Tibial artery (tissue), 4 donors: ENCODE measurements at regions of chr2 and their contacts with region 1.

Region 1: DNA sequence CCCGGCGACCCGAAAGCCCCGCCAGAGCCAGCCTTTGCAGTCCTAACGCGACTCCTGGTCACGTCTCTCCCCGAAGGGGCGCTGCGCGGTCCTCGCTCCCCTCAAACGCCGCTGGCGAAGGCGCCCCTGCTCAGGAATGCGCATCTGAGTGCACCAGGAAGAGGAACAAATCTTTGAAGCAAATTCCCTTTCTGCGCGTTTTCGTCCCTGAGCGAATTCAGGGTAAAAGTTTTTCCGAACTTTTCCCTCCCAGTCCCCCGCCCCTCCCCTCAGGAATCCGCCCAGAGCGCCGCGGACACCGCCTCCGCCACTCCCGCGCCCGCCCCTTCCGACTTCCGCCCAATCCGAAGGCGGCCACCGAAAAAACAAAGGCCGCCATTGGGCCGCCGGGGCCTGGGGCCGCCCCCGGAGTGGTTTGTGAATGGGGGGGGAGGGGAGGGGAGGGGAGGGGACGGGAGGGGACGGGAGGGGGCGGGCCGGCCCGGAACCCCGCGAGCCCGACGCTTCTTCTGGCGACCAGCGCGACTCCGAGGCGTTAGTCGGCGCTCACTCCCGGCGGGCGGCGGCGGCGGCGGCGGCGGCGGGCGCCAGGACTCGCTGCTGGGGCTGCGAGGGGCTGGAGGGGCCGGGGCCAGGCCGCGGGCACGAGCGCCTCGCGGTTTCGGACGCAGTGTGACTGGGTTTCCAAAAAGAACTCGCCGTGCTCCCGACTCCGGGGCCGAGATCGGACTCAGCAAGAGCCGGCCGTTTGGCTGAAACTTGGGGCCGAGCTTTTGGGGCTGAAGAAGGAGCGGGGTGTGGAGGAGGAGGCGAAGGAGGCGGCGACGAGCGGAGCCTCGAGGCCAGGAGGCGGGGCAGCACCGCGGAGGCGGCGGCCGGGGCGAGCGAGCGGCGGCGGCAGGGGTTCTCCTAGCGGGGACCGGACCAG is at the start of gene FZD7:
- DNase-seq: peak; percentile 91 to 97
- H3K4me3 ChIP-seq: peak within 1 kb of the TSS; percentile 81 to 96
- H3K27ac ChIP-seq: peak within 1 kb of the TSS; percentile 99
- H3K4me1 ChIP-seq: peaks cover 0 to 48% (median 27%) of the 10 kb centered on the region in 4 donors
- H3K27me3 ChIP-seq: no peaks in the 10 kb centered on the region
- CTCF ChIP-seq: no peak

Region 2: GRCh38 chr2:201785135-201785534 is 248.4 kb before region 1 on chr2:
- intact Hi-C with region 1: no loop called
- DNase-seq: no peak
- H3K4me3 ChIP-seq: no peak overlapping the region
- H3K27ac ChIP-seq: no peak overlapping the region
- H3K4me1 ChIP-seq: peaks cover 0 to 9% (median 1%) of the 10 kb centered on the region in 4 donors
- H3K27me3 ChIP-seq: no peaks in the 10 kb centered on the region
- CTCF ChIP-seq: no peak

Region 3: GRCh38 chr2:201795607-201796477 is 237.7 kb before region 1 on chr2:
- intact Hi-C with region 1: loop called (anchors 5 kb)
- DNase-seq: no peak
- H3K4me3 ChIP-seq: no peak overlapping the region
- H3K27ac ChIP-seq: peak overlapping the region in 1 of 2 donors; percentile 67
- H3K4me1 ChIP-seq: peaks cover 0 to 30% (median 1%) of the 10 kb centered on the region in 4 donors
- H3K27me3 ChIP-seq: no peaks in the 10 kb centered on the region
- CTCF ChIP-seq: peak; percentile 62 to 69

Region 4: DNA sequence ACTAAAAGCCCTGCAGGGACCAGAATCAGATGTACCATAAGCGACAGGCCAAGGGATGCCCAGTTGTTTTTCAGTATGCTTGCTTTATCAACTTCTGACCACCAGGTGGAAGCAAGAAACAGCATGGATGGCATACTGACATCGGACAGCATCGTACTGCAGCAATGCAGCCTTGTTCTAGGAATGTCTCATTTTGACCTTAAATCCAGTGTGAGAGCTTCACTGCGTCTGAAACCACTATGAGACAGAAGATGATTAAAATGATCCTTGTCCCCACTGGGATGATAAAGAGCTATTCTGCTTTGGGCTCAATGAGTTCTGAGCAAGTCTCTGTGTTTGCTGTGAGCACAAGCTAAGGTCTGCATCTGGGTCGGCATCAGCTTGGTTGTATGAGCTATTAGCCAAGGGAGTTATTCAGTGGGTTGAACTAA is 172.9 kb before region 1 on chr2:
- intact Hi-C with region 1: loop called (anchors 5 kb)
- DNase-seq: peak in 1 of 2 donors; percentile 28
- H3K4me3 ChIP-seq: no peak overlapping the region
- H3K27ac ChIP-seq: no peak overlapping the region
- H3K4me1 ChIP-seq: no peaks in the 10 kb centered on the region
- H3K27me3 ChIP-seq: no peaks in the 10 kb centered on the region
- CTCF ChIP-seq: peak; percentile 75 to 87

Region 5: GRCh38 chr2:201880993-201881611 is 152.5 kb before region 1 on chr2:
- intact Hi-C with region 1: loop called (anchors 2 kb)
- DNase-seq: peak; percentile 53 to 74
- H3K4me3 ChIP-seq: peak overlapping the region in 1 of 2 donors; percentile 22
- H3K27ac ChIP-seq: peak overlapping the region; percentile 57 to 65
- H3K4me1 ChIP-seq: peaks cover 0 to 46% (median 30%) of the 10 kb centered on the region in 4 donors
- H3K27me3 ChIP-seq: no peaks in the 10 kb centered on the region
- CTCF ChIP-seq: no peak

Region 6: DNA sequence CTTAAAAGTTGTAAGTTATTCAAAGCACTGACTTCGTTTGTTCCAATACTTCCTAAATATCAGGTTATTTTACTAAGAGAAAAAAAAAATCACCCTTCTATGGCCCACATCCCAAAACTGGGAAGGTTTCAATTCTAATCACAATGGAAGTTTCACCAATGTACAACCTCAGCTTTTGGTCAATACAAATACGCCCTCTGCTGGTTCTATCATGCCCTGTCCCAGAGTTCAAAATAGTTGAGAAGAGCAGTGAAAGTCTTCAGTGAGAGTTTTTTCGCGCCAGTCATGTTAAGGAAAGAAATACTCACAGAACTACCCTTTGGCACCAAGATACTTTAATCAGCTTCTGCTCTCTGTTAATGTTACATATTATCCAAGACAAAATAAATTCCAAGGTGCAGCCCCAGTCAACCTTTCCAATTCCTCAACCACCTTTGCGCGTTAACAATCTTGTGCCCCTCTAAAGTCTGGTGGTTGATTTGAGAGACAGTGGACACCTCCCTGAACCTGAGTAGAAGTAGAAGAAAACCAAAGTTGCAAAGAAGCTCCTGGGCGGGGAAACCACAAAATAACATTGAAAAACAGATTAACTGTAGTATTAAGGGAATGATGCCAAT is 144.9 kb after region 1 on chr2:
- intact Hi-C with region 1: loop called (anchors 5 kb)
- DNase-seq: peak in 1 of 2 donors; percentile 64
- H3K4me3 ChIP-seq: no peak overlapping the region
- H3K27ac ChIP-seq: no peak overlapping the region
- H3K4me1 ChIP-seq: no peaks in the 10 kb centered on the region
- H3K27me3 ChIP-seq: no peaks in the 10 kb centered on the region
- CTCF ChIP-seq: peak; percentile 80 to 88

Region 7: DNA sequence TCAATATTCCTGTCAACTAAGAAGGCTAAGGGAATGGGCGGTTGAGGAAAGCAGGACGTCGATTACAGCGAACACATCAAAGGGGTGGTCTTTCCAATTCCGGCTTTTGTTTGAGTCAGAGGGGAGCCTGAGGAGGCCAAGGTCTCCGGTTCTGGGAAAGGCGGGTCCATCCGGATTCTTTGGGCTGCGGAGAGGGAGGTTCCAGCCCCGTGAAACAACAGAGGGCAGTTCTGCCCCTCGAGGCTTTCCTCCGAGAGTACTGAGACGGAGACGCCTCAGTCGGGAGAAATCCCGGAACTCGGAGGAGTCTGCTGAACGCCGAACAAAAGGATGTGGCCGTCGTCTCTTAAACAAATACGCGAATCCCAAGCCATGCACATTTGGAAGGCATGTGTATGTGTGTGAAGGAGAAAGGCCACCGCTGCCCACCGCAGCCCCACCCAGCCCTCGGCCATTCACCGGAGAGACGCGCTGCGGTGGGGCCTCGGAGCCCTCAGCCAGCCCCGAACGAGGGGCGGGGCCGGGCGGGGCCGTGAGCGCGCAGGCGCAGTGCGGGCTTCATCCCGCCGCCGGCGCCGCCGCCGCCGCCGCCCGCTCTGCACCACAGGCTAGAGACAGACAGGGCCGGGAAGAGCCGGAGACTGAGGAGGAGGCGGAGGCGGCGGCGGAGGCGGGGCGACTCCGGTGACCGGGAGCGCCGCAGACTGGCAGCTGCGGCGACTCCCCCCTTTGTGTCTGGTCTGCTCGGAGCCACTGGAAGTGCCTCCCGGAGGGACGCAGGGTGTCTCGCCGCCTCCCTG is 342.2 kb after region 1 on chr2 and contains the start of gene BMPR2:
- intact Hi-C with region 1: loop called (anchors 5 kb)
- DNase-seq: peak; percentile 91 to 95
- H3K4me3 ChIP-seq: peak within 1 kb of the TSS; percentile 87 to 98
- H3K27ac ChIP-seq: peak within 1 kb of the TSS; percentile 96 to 97
- H3K4me1 ChIP-seq: peaks cover 0 to 22% (median 12%) of the 10 kb centered on the region in 4 donors
- H3K27me3 ChIP-seq: no peaks in the 10 kb centered on the region
- CTCF ChIP-seq: no peak